ENCODE measurements at regions of chr4 and their contacts with region 1.

Region 1: DNA sequence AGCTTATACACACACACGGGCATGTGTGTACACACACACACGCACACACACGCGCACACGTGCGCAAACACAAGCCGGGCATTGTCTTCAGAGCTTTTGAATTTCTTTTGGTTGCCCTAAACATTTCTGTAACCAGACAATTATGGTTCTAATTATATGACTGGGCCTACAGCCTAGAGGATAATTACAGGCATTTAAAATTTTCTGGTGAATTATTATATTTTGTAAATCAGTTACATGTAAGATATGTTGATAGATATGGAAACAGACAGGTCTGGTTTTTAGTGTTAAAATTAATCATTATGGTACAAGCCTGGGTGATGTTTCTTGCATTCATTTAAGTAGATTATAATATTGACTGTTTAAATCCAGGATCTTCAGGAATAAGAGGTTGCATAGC is 1120.5 kb downstream of the ADGRL3 start:
- DNase-seq: no peak
- ATAC-seq: no peak
- H3K4me3 Mint-ChIP-seq: no peak overlapping the region
- H3K27ac Mint-ChIP-seq: no peak overlapping the region
- H3K4me1 Mint-ChIP-seq: no peaks in the 10 kb centered on the region
- H3K27me3 Mint-ChIP-seq: 0 out of 2 replicates have a peak, but pooled peaks cover 2% of the 10 kb centered on the region
- CTCF ChIP-seq: no peak

Region 2: GRCh38 chr4:61831987-61832386 is 488.6 kb before region 1 on chr4:
- CTCF ChIA-PET with region 1: no interaction called
- POLR2A ChIA-PET with region 1: interaction called, 10 read pairs
- DNase-seq: no peak
- ATAC-seq: no peak
- H3K4me3 Mint-ChIP-seq: no peak overlapping the region
- H3K27ac Mint-ChIP-seq: no peak overlapping the region; the same call in 1 of the 2 replicates
- H3K4me1 Mint-ChIP-seq: peaks cover 77% of the 10 kb centered on the region
- H3K27me3 Mint-ChIP-seq: no peaks in the 10 kb centered on the region
- CTCF ChIP-seq: no peak

Region 3: GRCh38 chr4:62232814-62233213 is 87.8 kb before region 1 on chr4:
- CTCF ChIA-PET with region 1: no interaction called
- POLR2A ChIA-PET with region 1: no interaction called
- DNase-seq: no peak
- ATAC-seq: no peak; the same call in 1 of the 2 replicates
- H3K4me3 Mint-ChIP-seq: no peak overlapping the region
- H3K27ac Mint-ChIP-seq: peak overlapping the region; percentile 3; the same call in 1 of the 2 replicates
- H3K4me1 Mint-ChIP-seq: peaks cover 5% of the 10 kb centered on the region; the same call in 1 of the 2 replicates
- H3K27me3 Mint-ChIP-seq: no peaks in the 10 kb centered on the region
- CTCF ChIP-seq: no peak

Region 4: GRCh38 chr4:62408454-62408853 is 87.8 kb after region 1 on chr4:
- CTCF ChIA-PET with region 1: no interaction called
- POLR2A ChIA-PET with region 1: no interaction called
- DNase-seq: no peak
- ATAC-seq: no peak
- H3K4me3 Mint-ChIP-seq: no peak overlapping the region
- H3K27ac Mint-ChIP-seq: no peak overlapping the region
- H3K4me1 Mint-ChIP-seq: no peaks in the 10 kb centered on the region
- H3K27me3 Mint-ChIP-seq: no peaks in the 10 kb centered on the region
- CTCF ChIP-seq: no peak

Measured in WTC11 (cell line).